ENCODE measurements at regions of chr15 and their contacts with region 1.

Region 1: DNA sequence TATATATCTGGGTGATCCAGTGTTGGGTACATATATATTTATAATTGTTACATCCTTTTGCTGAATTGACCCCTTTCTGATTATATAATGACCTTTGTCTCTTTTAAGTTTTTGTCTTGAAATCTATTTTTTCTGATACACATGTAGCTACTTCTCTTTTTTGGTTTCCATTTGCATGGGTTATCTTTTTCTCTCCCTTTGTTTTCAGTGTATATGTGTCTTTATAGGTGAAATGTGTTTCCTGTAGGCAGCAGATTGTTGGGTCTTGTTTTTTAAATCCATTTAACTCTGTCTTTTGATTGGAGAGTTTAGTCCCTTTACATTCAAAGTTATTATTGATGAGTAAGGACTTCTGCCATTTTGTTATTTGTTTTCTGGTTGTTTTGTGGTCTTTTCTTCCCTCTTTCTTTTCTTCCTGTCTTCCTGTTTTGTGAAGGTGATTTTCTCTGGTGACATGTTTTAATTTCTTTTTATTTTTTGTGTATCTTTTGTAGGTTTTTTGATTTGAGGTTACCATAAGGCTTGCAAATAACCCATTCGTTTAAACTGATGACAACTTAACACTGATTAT is 56.8 kb downstream of the STARD9 start:
- DNase-seq: no peak
- H3K4me3 ChIP-seq: no peak overlapping the region
- H3K27ac ChIP-seq: no peak overlapping the region
- H3K4me1 ChIP-seq: no peaks in the 10 kb centered on the region
- H3K27me3 ChIP-seq: no peaks in the 10 kb centered on the region
- CTCF ChIP-seq: no peak
- EP300 ChIP-seq: no peak
- POLR2A ChIP-seq: no peak

Region 2: DNA sequence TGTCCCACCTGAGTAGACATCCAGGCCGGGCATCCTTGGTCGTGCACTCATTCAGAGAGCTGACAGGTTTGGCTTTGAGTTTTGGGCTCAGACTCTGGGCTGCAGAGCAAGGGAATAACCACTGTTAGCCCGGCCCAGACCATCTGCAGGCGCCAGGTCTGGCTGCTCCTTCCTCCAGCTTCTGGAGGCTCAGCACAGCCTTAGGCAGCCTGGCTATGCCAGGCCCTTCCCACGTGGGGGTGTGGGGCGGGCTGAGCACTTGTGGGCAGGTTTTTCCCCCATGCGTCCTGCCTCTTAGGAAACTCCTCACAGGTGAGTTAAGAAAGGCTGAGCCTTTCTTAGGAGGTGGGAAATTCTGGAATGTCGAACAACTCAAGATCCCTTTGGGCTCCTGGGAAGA is 782.3 kb before region 1 on chr15:
- in situ Hi-C with region 1: no loop called
- intact Hi-C with region 1: no loop called
- DNase-seq: no peak
- H3K4me3 ChIP-seq: no peak overlapping the region
- H3K27ac ChIP-seq: no peak overlapping the region
- H3K4me1 ChIP-seq: no peaks in the 10 kb centered on the region
- H3K27me3 ChIP-seq: peaks cover 21% of the 10 kb centered on the region
- CTCF ChIP-seq: no peak
- EP300 ChIP-seq: no peak
- POLR2A ChIP-seq: no peak

Region 3: GRCh38 chr15:42528970-42529369 is 103.2 kb before region 1 on chr15:
- in situ Hi-C with region 1: loop called in 2 of 4 experiments (anchors 10 to 25 kb)
- intact Hi-C with region 1: no loop called
- DNase-seq: no peak
- H3K4me3 ChIP-seq: no peak overlapping the region
- H3K27ac ChIP-seq: no peak overlapping the region
- H3K4me1 ChIP-seq: no peaks in the 10 kb centered on the region
- H3K27me3 ChIP-seq: no peaks in the 10 kb centered on the region
- CTCF ChIP-seq: no peak
- EP300 ChIP-seq: no peak
- POLR2A ChIP-seq: no peak

Region 4: DNA sequence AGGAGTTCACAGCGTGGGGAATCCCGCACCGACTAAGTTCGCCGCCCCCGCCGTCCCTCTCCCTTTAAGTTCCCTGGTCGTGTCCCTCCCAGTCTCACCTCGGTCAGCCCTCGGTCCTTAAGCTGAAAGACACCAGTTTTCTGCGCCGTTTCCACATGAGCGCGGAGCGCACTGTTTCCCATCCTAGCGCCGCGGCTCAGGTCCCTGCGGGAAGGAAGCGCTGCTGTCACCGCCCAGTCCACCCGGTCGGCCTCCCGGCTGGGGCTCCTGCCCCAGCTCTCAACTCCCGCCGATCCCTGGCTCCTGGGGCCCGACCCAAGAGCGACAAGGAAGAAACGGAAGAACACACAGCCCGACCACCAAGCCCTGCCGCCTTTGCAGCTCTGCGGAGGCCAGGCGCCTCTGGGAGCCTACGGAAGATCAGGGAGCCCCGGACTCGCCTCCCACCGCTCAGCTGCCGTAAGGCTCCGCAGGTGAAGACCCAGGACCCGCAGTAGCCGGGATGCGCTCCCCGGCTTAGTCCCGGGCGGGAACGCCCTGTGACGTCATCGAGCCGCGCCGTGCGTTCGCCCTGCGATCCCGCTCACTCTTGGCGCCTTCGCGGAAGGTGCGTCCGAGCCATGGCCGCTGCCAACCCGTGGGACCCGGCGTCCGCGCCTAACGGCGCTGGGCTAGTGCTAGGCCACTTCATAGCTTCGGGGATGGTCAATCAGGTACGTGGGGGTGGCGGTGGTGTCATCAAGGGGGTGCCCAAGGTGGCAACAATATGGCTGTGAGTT is 83.7 kb before region 1 on chr15 and contains the starts of genes HAUS2 and LRRC57:
- in situ Hi-C with region 1: loop called in 1 of 4 experiments (anchors 25 kb)
- intact Hi-C with region 1: no loop called
- DNase-seq: peak; percentile 94
- H3K4me3 ChIP-seq: peak within 1 kb of the TSS; percentile 65 to 94 (median 76)
- H3K27ac ChIP-seq: peak within 1 kb of the TSS; percentile 91 to 98 (median 93)
- H3K4me1 ChIP-seq: peaks cover 4 to 40% (median 21%) of the 10 kb centered on the region in 4 donors
- H3K27me3 ChIP-seq: no peaks in the 10 kb centered on the region
- CTCF ChIP-seq: peak in 1 of 5 experiments; percentile 34
- EP300 ChIP-seq: no peak
- POLR2A ChIP-seq: peak; percentile 95
- total RNA-seq, gene HAUS2: 10.6 to 27.5 (median 13.6) TPM
- total RNA-seq, gene LRRC57: 12.3 to 42.4 (median 28.7) TPM

Measured in transverse colon (tissue), 4 donors.